K562 (cell line): ENCODE measurements at regions of chr5 and their contacts with region 1.

Region 1: DNA sequence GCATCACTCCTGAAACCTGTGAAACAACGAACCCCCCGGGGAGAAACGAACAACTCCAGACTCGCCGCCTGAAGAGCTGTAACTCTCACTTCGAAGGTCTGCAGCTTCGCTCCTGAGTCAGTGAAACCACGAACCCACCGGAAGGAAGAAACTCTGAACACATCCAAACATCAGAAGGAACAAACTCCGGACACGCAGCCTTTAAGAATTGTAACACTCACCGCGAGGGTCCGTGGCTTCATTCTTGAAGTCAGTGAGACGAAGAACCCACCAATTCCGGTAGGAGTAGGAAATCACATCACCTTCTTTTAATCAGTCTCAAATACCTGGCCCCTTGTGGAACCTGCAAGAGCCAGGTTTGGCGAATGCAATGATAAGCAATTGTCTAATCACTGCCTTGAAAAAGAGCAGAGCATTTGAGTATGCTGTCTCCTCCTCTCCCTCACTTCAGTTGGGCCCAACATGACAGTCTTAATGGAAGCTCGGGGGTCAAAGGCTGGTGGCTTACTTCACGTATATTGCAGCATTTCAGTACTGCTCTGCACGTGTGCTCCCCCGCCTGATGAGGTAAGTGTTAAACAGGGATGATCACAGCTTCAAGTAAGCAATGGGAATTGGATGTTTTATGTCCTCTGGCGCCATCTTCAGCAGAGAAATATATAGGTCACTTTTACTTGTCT is 473 bp downstream of the IRGM start:
- DNase-seq: peak; percentile 58 to 84 (median 62)
- ATAC-seq: peak; percentile 97
- H3K4me3 ChIP-seq: no peak overlapping the region
- H3K27ac ChIP-seq: 0 out of 3 replicates have a peak overlapping the region, but pooled peaks have one; percentile 12
- H3K4me1 ChIP-seq: peaks cover 0 to 5% of the 10 kb centered on the region in 2 experiments; a peak in 3 of 5 replicates
- H3K27me3 ChIP-seq: peaks cover 0 to 14% of the 10 kb centered on the region in 2 experiments; a peak in 3 of 5 replicates
- CTCF ChIP-seq: peak; percentile 71 to 96 (median 84)
- EP300 ChIP-seq: no peak
- POLR2A ChIP-seq: no peak
- RAD21 ChIP-seq: peak; percentile 90 to 96

Region 2: GRCh38 chr5:150449517-150450339 is 397.1 kb before region 1 on chr5 and contains the start of gene RPS14:
- CTCF ChIA-PET with region 1: no interaction called
- POLR2A ChIA-PET with region 1: no interaction called
- in situ Hi-C with region 1: loop called (anchors 10 kb)
- intact Hi-C with region 1: no loop called
- DNase-seq: peak; percentile 93 to 96 (median 94)
- ATAC-seq: peak; percentile 94
- H3K4me3 ChIP-seq: peak within 1 kb of the TSS; percentile 87
- H3K27ac ChIP-seq: peak within 1 kb of the TSS; percentile 100
- H3K4me1 ChIP-seq: peaks cover 8 to 11% of the 10 kb centered on the region in 2 experiments; a peak in 4 of 5 replicates
- H3K27me3 ChIP-seq: no peaks in the 10 kb centered on the region
- CTCF ChIP-seq: peak; percentile 92
- EP300 ChIP-seq: 0 out of 2 replicates have a peak, but pooled peaks have one; percentile 20
- POLR2A ChIP-seq: peak; percentile 99
- RAD21 ChIP-seq: peak; percentile 11 to 15; a peak in 2 of 4 replicates
- polyA plus RNA-seq, gene RPS14: 1,824 to 2,512 TPM

Region 3: DNA sequence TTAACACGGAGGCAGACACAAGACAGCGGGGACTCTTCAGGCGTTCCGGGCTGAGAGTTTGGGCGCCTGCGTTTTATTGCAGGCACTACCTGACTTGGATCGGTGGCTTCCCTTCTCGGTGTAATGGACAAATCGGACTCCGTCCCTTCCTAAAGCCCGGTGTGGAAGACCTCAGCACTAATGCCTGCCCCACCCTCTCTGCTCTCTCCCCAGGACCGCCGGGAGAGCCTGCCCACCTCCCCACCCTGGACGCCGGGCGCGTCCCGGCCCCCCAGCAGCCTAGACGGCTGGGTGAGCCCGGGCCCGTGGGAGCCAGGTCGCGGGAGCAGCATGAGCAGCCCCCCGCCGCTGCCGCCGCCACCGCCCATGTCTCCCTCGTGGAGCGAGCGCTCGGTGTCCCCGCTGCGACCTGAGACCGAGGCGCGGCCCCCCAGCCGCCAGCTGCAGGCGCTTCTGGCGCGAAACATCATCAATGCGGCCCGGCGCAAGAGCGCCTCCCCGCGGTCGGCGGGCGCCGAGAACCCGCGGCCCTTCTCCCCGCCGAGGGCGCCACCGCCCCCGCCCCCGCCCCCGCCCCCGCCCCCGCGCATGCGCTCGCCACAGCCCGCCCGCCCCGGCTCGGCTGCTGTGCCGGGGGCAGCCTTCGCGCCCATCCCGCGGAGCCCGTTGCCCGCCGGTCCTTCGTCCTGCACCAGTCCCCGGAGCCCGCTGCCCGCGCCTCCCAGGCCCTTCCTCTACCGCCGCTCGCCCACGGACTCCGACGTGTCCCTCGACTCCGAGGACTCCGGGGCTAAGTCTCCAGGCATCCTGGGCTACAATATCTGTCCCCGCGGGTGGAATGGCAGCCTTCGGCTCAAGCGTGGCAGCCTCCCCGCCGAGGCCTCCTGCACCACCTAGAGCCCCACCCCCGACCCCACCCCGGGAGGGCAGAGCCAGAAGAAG is 190.3 kb before region 1 on chr5:
- CTCF ChIA-PET with region 1: no interaction called
- POLR2A ChIA-PET with region 1: no interaction called
- in situ Hi-C with region 1: no loop called
- intact Hi-C with region 1: loop called (anchors 2 kb)
- DNase-seq: peak; percentile 88 to 99 (median 98)
- ATAC-seq: peak; percentile 91
- H3K4me3 ChIP-seq: peak overlapping the region; percentile 64
- H3K27ac ChIP-seq: 0 out of 3 replicates have a peak overlapping the region, but pooled peaks have one; percentile 19
- H3K4me1 ChIP-seq: peaks cover 9 to 13% of the 10 kb centered on the region in 2 experiments; a peak in 4 of 5 replicates
- H3K27me3 ChIP-seq: peaks cover 6 to 50% of the 10 kb centered on the region in 2 experiments
- CTCF ChIP-seq: peak; percentile 44 to 90 (median 77); a peak in 5 of 6 replicates
- EP300 ChIP-seq: no peak
- POLR2A ChIP-seq: peak; percentile 48; the same call in 1 of the 2 replicates
- RAD21 ChIP-seq: peak; percentile 70 to 79

Region 4: GRCh38 chr5:150723845-150724244 is 122.9 kb before region 1 on chr5:
- CTCF ChIA-PET with region 1: no interaction called
- POLR2A ChIA-PET with region 1: no interaction called
- in situ Hi-C with region 1: no loop called
- intact Hi-C with region 1: no loop called
- DNase-seq: no peak
- ATAC-seq: no peak
- H3K4me3 ChIP-seq: no peak overlapping the region
- H3K27ac ChIP-seq: no peak overlapping the region
- H3K4me1 ChIP-seq: no peaks in the 10 kb centered on the region
- H3K27me3 ChIP-seq: no peaks in the 10 kb centered on the region
- CTCF ChIP-seq: no peak
- EP300 ChIP-seq: no peak
- POLR2A ChIP-seq: no peak
- RAD21 ChIP-seq: no peak

Region 5: DNA sequence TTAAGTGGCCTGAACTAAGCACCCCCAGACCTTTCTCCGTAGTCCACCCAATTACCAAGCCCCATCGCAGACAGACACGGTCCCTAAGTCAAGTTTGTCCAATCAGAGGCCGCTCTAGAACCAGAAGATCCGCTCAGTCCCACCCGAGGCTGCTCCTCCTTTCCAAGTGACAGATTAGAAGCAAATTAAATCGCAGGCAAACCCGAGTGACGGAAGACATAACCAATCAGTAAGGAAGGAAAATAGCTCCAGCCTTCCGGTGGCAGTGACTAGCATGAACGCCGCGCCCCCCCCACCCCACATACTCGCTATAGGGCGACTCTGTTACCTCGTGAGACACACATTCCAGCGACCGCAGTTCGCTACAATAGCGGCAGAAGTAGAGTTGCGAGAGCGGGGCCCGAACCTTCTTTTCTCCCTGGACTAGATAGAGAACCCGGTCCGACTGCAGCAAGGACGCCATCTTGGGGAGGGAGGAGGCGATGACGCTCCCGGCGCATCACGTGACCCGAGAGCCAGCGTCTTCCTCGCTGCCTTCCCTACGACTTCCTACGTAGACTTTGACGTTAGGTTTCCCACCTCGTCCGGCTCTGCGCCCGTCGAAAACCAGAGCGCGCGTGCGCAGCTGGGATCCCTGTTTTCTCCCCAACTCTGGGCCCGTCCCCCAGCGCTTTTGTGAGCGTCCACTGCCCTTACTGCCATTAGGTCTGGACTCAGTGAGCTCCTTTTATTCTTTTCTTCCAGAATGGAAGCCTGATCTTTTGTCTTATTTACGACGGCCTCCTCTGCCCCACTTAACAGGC is 88.1 kb before region 1 on chr5 and contains the start of gene DCTN4:
- CTCF ChIA-PET with region 1: no interaction called
- POLR2A ChIA-PET with region 1: no interaction called
- in situ Hi-C with region 1: no loop called
- intact Hi-C with region 1: loop called (anchors 5 kb)
- DNase-seq: peak; percentile 91 to 98 (median 94)
- ATAC-seq: peak; percentile 92
- H3K4me3 ChIP-seq: peak within 1 kb of the TSS; percentile 49
- H3K27ac ChIP-seq: peak within 1 kb of the TSS; percentile 99
- H3K4me1 ChIP-seq: peaks cover 4 to 24% of the 10 kb centered on the region in 2 experiments; a peak in 4 of 5 replicates
- H3K27me3 ChIP-seq: no peaks in the 10 kb centered on the region
- CTCF ChIP-seq: no peak
- EP300 ChIP-seq: no peak
- POLR2A ChIP-seq: peak; percentile 92
- RAD21 ChIP-seq: peak; percentile 8 to 19; a peak in 2 of 4 replicates
- polyA plus RNA-seq, gene DCTN4: 20.4 to 29.6 TPM

Region 6: GRCh38 chr5:151020304-151021110 is 173.7 kb after region 1 on chr5 and contains the start of gene GPX3:
- CTCF ChIA-PET with region 1: no interaction called
- POLR2A ChIA-PET with region 1: no interaction called
- in situ Hi-C with region 1: no loop called
- intact Hi-C with region 1: no loop called
- DNase-seq: no peak
- ATAC-seq: no peak
- H3K4me3 ChIP-seq: no peak within 1 kb of the TSS
- H3K27ac ChIP-seq: no peak within 1 kb of the TSS
- H3K4me1 ChIP-seq: peaks cover 36 to 64% of the 10 kb centered on the region in 2 experiments
- H3K27me3 ChIP-seq: no peaks in the 10 kb centered on the region
- CTCF ChIP-seq: no peak
- EP300 ChIP-seq: no peak
- POLR2A ChIP-seq: no peak
- RAD21 ChIP-seq: no peak
- polyA plus RNA-seq, gene GPX3: not detected

Region 7: GRCh38 chr5:151051066-151051930 is 204.5 kb after region 1 on chr5:
- CTCF ChIA-PET with region 1: no interaction called
- POLR2A ChIA-PET with region 1: no interaction called
- in situ Hi-C with region 1: no loop called
- intact Hi-C with region 1: no loop called
- DNase-seq: peak; percentile 70 to 85 (median 78)
- ATAC-seq: peak; percentile 97
- H3K4me3 ChIP-seq: no peak overlapping the region
- H3K27ac ChIP-seq: no peak overlapping the region
- H3K4me1 ChIP-seq: no peaks in the 10 kb centered on the region
- H3K27me3 ChIP-seq: no peaks in the 10 kb centered on the region
- CTCF ChIP-seq: peak; percentile 94 to 98 (median 97)
- EP300 ChIP-seq: no peak
- POLR2A ChIP-seq: no peak
- RAD21 ChIP-seq: peak; percentile 96 to 99

Region 8: DNA sequence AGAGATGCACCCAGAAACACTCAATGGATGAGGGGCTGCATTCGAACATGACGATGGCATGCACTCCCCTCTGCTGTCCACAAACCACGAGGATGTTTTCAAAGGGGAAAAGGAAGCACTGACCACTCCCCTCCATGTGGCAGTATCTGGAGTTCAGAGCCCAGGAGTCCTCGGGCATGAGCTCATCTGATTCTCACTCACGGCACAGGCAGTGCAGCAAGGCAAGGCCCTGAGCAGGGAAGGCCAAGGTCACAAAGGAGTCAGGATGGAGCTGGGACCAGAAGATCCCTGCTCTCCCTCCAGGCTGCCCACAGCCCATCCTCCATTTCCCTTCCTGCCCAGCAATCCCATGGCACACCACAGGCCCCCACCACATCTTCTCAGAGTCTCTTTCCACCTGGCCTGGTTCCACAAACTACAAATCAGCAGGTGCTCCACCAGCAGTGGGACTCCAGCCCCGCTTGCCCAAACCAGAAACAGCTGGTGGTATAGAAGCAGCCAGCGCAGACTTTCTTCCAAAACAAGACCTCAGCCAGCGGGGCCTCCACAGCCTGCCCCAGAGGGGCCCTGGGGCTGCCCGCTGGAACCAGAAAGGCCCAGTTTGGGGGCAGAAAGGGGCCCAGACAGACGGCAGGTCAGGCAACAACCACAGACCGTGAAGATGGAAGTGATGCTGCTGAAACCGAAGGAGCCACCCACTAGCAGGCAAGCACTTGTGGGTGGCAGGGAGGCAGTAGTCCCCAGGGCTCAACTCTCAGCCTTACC is 221.8 kb after region 1 on chr5:
- CTCF ChIA-PET with region 1: no interaction called
- POLR2A ChIA-PET with region 1: no interaction called
- in situ Hi-C with region 1: no loop called
- intact Hi-C with region 1: no loop called
- DNase-seq: no peak
- ATAC-seq: no peak
- H3K4me3 ChIP-seq: no peak overlapping the region
- H3K27ac ChIP-seq: no peak overlapping the region
- H3K4me1 ChIP-seq: peaks cover 2 to 11% of the 10 kb centered on the region in 2 experiments; a peak in 4 of 5 replicates
- H3K27me3 ChIP-seq: no peaks in the 10 kb centered on the region; a peak in 1 of 5 replicates
- CTCF ChIP-seq: no peak
- EP300 ChIP-seq: no peak
- POLR2A ChIP-seq: no peak
- RAD21 ChIP-seq: no peak